ENCODE measurements at regions of chr20 and their contacts with region 1.

Region 1: GRCh38 chr20:48620519-48621254 is 207.1 kb downstream of the PREX1 start:
- DNase-seq: peak; percentile 81
- ATAC-seq: peak; percentile 89
- H3K4me3 ChIP-seq: peak overlapping the region in 1 of 5 experiments; percentile 23
- H3K4me3 Mint-ChIP-seq: peak overlapping the region; percentile 75
- H3K27ac ChIP-seq: no peak overlapping the region
- H3K27ac Mint-ChIP-seq: peak overlapping the region; percentile 17
- H3K4me1 ChIP-seq: peaks cover 5 to 15% of the 10 kb centered on the region in 2 donors
- H3K4me1 Mint-ChIP-seq: peaks cover 8% of the 10 kb centered on the region
- H3K27me3 ChIP-seq: peaks cover 0 to 5% (median 0%) of the 10 kb centered on the region in 4 experiments
- H3K27me3 Mint-ChIP-seq: no peaks in the 10 kb centered on the region
- CTCF ChIP-seq: peak; percentile 93

Region 2: DNA sequence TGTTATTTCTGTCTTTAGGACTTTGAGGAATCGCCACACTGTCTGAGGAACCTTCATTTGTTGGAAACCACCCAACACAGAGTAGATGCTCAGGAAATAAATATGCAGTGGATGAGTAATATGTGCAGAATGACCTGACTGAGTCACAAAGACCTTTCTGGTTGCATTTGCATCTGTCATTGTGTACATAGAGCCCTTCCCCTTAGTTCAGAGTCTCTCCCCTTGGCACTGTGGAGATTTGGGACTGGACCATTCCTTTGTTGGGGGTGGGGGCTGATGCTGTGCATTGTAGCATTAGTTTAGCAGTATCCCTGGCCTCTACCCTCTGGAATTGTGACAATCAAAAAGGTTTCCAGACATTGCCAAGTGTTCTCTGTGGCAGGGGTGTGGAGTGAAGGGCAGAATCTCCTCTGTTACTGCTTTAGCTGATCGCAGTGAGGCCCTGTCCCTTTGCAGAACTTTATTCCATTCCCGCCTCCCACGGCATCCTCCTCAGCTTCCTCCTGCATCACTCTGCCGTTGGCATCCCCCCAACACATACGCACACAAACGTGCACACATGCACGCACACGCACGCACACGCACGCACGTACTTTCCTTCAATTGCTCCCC is 1661.5 kb before region 1 on chr20:
- CTCF ChIA-PET with region 1: no interaction called
- POLR2A ChIA-PET with region 1: no interaction called
- intact Hi-C with region 1: no loop called
- DNase-seq: no peak
- ATAC-seq: no peak
- H3K4me3 ChIP-seq: no peak overlapping the region
- H3K4me3 Mint-ChIP-seq: no peak overlapping the region
- H3K27ac ChIP-seq: no peak overlapping the region
- H3K27ac Mint-ChIP-seq: no peak overlapping the region
- H3K4me1 ChIP-seq: no peaks in the 10 kb centered on the region
- H3K4me1 Mint-ChIP-seq: no peaks in the 10 kb centered on the region
- H3K27me3 ChIP-seq: no peaks in the 10 kb centered on the region
- H3K27me3 Mint-ChIP-seq: peaks cover 19% of the 10 kb centered on the region
- CTCF ChIP-seq: no peak

Region 3: DNA sequence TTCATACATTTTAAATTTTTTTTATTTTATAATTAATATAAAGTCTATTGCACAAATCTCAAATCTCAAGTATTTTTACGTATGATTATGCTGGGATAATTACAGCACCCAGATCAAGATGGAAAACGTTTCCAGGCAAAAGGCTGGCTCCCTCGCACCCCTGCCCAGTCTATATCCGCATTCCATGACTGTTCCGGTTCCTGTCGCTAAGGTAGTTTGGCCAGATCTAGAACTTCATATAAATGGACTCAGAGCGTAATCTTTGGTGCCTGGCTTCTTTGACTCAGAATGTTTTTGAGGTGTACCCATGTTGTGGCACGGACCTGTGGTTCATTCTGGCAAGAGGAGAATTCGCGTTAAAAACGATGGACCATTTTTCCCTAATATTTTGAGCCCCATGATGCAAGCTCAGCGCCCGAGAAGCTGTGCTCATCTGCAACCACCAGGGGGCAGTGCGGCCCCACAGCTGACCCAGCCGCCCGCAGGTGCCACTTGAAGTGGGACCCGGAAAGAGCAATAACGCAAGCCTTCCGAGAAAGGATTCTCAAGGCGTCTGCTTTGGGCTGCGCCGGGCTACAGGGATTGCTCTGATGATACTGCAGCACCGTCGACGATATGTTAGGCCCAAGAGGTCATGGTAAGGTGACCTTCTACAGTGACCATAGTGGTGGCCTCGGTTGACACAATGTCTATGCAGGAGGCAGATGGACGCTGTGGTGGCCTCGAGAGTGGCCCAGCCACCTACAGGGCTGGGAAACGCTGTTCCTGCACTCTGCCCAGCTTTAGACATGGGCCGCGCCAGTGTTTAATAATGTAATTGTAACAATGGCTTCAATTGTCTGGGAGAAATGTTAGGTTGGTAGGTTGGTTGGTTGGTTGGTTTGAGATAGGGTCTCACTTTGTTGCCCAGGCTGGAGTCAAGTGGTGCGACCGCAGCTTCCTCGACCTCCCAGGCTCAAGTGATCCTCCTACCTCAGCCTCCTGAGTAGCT is 1424.3 kb before region 1 on chr20:
- CTCF ChIA-PET with region 1: interaction called, 13 read pairs
- POLR2A ChIA-PET with region 1: no interaction called
- intact Hi-C with region 1: no loop called
- DNase-seq: peak; percentile 81
- ATAC-seq: peak; percentile 82
- H3K4me3 ChIP-seq: peak overlapping the region in 2 of 5 experiments; percentile 12 to 33
- H3K4me3 Mint-ChIP-seq: peak overlapping the region; percentile 16
- H3K27ac ChIP-seq: no peak overlapping the region
- H3K27ac Mint-ChIP-seq: no peak overlapping the region
- H3K4me1 ChIP-seq: peaks cover 3 to 7% of the 10 kb centered on the region in 2 donors
- H3K4me1 Mint-ChIP-seq: peaks cover 5% of the 10 kb centered on the region
- H3K27me3 ChIP-seq: no peaks in the 10 kb centered on the region
- H3K27me3 Mint-ChIP-seq: no peaks in the 10 kb centered on the region
- CTCF ChIP-seq: peak; percentile 100

Region 4: GRCh38 chr20:47677635-47678453 is 942.8 kb before region 1 on chr20:
- CTCF ChIA-PET with region 1: interaction called, 299 read pairs
- POLR2A ChIA-PET with region 1: no interaction called
- intact Hi-C with region 1: loop called (anchors 1 kb)
- DNase-seq: peak; percentile 79
- ATAC-seq: peak; percentile 72
- H3K4me3 ChIP-seq: no peak overlapping the region
- H3K4me3 Mint-ChIP-seq: no peak overlapping the region
- H3K27ac ChIP-seq: no peak overlapping the region
- H3K27ac Mint-ChIP-seq: no peak overlapping the region
- H3K4me1 ChIP-seq: no peaks in the 10 kb centered on the region
- H3K4me1 Mint-ChIP-seq: peaks cover 1% of the 10 kb centered on the region
- H3K27me3 ChIP-seq: peaks cover 0 to 2% (median 0%) of the 10 kb centered on the region in 4 experiments
- H3K27me3 Mint-ChIP-seq: peaks cover 5% of the 10 kb centered on the region
- CTCF ChIP-seq: peak; percentile 88

Region 5: DNA sequence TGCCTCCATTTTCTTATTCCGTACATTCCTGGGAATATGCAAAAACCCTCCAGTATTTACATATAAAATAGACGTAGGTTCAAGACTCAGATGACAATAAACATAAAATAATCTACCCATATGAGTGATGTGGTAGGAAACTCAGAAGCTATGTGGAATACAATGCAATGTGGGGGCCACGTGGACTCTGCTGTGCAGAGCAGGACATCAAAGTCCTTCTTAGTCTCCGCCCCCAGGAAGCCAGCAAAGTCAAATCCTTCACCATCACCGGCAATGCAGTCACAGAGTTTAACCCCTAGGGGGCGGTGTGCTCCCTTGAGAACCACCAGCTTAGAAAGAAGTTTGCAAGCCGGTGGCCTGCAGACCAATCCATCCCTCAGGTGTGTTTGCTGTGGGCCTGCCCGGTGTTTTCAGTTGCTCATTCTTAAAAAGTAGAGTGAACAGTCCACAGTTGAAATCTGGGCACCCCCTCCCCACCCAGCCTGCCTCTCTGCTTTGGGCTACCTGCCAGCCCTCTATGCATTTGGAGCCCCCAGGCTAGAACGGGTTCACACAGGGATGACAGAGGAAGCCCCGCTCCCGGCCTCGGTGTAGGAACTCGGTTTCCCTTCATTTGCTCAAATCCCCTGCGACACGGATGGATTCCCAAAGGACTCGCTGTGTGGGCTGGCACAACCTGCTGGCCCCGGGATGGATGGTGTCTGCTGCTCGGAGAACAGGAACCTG is 895.3 kb before region 1 on chr20:
- CTCF ChIA-PET with region 1: interaction called, 124 read pairs
- POLR2A ChIA-PET with region 1: interaction called, 3 read pairs
- intact Hi-C with region 1: no loop called
- DNase-seq: peak; percentile 89
- ATAC-seq: peak; percentile 13
- H3K4me3 ChIP-seq: no peak overlapping the region
- H3K4me3 Mint-ChIP-seq: no peak overlapping the region
- H3K27ac ChIP-seq: no peak overlapping the region
- H3K27ac Mint-ChIP-seq: peak overlapping the region; percentile 55
- H3K4me1 ChIP-seq: peaks cover 37 to 49% of the 10 kb centered on the region in 2 donors
- H3K4me1 Mint-ChIP-seq: peaks cover 50% of the 10 kb centered on the region
- H3K27me3 ChIP-seq: no peaks in the 10 kb centered on the region
- H3K27me3 Mint-ChIP-seq: no peaks in the 10 kb centered on the region
- CTCF ChIP-seq: peak; percentile 92

Region 6: DNA sequence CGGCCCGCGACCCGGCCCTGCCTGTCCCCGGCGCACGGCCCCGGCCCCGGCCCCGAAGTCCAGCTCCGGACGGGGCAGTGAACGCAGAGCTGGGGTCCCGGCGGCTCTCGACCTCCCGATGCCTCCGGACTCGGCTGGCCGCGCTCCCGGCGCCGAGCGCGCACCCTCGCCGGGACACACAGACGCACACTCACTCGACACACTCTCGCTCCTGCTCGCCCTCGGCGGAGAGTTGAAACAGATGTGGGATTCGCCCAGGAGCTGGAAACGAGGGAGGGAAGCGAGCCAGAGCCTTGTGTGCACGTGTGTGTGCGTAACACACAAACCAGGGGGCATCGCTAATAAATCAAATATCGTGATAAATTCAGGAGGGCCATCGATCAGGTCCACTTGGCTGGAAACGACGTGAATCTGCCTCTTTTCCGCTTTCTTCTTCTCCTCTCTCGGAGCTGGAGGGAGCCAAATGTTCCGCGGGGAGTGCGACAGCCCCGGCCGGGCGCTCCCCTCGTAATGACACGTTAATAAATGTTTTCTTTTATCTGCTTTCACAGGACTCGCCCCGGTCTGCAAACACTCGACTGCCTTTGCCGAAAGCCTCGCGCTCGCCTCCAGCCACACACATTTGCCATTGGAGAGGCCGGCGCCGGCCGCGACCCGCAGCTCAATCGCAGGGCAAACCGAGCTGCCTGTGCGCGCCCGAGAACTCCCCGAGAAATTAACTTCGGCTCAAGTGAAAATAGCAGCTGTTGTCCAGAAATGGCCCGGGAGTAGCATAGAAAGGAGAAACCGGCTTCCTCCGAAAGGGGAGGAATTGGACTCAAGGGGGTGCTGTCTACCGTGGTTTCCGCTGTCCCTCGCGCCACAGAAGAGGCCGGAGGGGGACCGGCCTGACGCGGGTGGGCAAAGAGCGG is 834.6 kb before region 1 on chr20:
- CTCF ChIA-PET with region 1: interaction called, 49 read pairs
- POLR2A ChIA-PET with region 1: no interaction called
- intact Hi-C with region 1: loop called (anchors 1 kb)
- DNase-seq: peak; percentile 71
- ATAC-seq: peak; percentile 67
- H3K4me3 ChIP-seq: peak overlapping the region; percentile 24 to 79 (median 54)
- H3K4me3 Mint-ChIP-seq: peak overlapping the region; percentile 89
- H3K27ac ChIP-seq: no peak overlapping the region
- H3K27ac Mint-ChIP-seq: no peak overlapping the region
- H3K4me1 ChIP-seq: peaks cover 19 to 25% of the 10 kb centered on the region in 2 donors
- H3K4me1 Mint-ChIP-seq: peaks cover 23% of the 10 kb centered on the region
- H3K27me3 ChIP-seq: peaks cover 0 to 46% (median 25%) of the 10 kb centered on the region in 4 experiments
- H3K27me3 Mint-ChIP-seq: peaks cover 58% of the 10 kb centered on the region
- CTCF ChIP-seq: peak; percentile 64

Region 7: GRCh38 chr20:48350313-48351008 is 270.2 kb before region 1 on chr20:
- CTCF ChIA-PET with region 1: interaction called, 10 read pairs
- POLR2A ChIA-PET with region 1: no interaction called
- intact Hi-C with region 1: loop called (anchors 2 kb)
- DNase-seq: peak; percentile 56
- ATAC-seq: peak; percentile 39
- H3K4me3 ChIP-seq: no peak overlapping the region
- H3K4me3 Mint-ChIP-seq: no peak overlapping the region
- H3K27ac ChIP-seq: no peak overlapping the region
- H3K27ac Mint-ChIP-seq: no peak overlapping the region
- H3K4me1 ChIP-seq: no peaks in the 10 kb centered on the region
- H3K4me1 Mint-ChIP-seq: no peaks in the 10 kb centered on the region
- H3K27me3 ChIP-seq: no peaks in the 10 kb centered on the region
- H3K27me3 Mint-ChIP-seq: no peaks in the 10 kb centered on the region
- CTCF ChIP-seq: peak; percentile 40

Region 8: DNA sequence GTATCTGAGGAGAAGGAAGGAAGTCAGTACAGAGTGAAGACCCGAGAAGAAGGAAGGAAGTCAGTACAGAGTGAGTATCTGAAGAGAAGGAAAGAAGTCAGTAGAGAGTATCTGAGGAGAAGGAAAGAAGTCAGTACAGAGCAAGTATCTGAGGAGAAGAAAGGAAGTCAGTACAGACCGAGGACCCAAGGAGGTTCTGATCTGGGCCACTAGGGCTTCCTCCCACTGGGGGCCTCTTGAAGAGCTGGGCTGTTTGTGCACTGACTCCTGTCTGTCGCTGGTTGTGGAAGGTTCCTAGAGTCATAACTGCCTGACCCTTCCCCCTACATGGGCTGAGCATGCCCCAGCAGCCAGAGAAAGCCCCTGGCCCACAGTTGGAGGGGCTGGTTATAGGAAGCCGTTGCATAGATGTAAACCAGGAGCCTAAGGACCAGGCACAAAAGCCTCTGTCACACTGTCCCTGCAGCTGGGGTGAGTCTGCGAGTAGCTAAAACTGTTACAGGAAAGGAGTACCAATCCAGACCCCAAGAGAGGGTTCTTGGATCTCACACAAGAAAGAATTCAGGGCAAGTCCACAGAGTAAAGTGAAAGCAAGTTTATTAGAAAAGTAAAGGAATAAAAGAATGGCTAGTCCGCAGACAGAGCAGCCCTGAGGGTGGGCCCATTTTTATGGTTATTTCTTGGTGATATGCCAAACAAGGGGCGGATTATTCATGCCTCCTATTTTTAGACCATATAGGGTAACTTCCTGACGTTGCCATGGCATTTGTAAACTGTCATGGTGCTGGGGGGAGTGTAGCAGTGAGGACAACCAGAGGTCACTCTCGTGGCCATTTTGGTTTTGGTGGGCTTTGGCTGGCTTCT is 188.8 kb before region 1 on chr20:
- CTCF ChIA-PET with region 1: no interaction called
- POLR2A ChIA-PET with region 1: no interaction called
- intact Hi-C with region 1: no loop called
- DNase-seq: no peak
- ATAC-seq: no peak
- H3K4me3 ChIP-seq: no peak overlapping the region
- H3K4me3 Mint-ChIP-seq: no peak overlapping the region
- H3K27ac ChIP-seq: peak overlapping the region in 1 of 2 donors; percentile 81
- H3K27ac Mint-ChIP-seq: peak overlapping the region; percentile 57
- H3K4me1 ChIP-seq: peaks cover 0 to 3% of the 10 kb centered on the region in 2 donors
- H3K4me1 Mint-ChIP-seq: peaks cover 8% of the 10 kb centered on the region
- H3K27me3 ChIP-seq: no peaks in the 10 kb centered on the region
- H3K27me3 Mint-ChIP-seq: peaks cover 10% of the 10 kb centered on the region
- CTCF ChIP-seq: no peak

Measured in B cell (primary cell).